Gastrocnemius medialis (tissue), 4 donors: ENCODE measurements at regions of chr10 and their contacts with region 1.

Region 1: DNA sequence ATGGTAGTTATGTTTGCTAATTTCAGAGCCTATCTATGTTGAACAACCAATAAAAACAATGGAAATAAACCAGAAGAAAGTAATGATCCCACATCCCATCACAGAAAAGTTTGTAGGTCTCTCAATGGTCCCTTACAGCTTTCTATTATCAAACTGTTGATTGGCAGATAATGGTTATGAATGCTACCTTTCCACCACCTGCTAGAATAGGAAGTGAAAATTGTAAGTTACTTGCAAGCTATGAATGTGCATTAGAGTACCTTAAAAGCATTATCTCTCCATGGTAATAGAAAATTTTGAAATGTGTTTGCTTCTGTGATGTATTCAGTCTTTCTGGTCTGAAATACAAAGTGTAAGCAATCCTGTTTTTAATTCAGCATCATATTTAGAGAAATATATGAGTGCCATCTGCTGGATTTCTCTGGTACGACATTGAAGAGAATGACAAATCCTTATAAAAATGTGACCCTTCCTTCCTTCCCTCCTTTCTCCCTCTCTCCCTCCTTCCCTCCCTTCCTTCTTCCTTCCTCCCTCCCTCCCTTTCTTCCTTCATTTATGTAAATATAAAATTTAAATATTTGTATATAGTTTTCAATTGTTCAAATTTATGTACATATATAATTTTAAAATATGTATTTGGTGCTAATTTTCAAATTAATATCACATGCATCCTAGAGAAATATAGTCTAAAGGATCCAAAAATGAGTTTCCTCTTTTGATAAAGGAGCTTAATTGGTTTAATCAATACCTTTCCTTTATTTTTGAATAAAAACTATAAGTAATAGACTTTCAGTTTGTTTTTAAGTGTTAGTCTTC is 41.4 kb upstream of the PNLIPRP3 start:
- DNase-seq: no peak
- ATAC-seq: no peak
- H3K4me3 ChIP-seq: no peak overlapping the region
- H3K27ac ChIP-seq: no peak overlapping the region
- H3K4me1 ChIP-seq: no peaks in the 10 kb centered on the region
- H3K27me3 ChIP-seq: no peaks in the 10 kb centered on the region
- CTCF ChIP-seq: peak in 4 of 5 experiments; percentile 22 to 52 (median 35)
- POLR2A ChIP-seq: no peak

Region 2: DNA sequence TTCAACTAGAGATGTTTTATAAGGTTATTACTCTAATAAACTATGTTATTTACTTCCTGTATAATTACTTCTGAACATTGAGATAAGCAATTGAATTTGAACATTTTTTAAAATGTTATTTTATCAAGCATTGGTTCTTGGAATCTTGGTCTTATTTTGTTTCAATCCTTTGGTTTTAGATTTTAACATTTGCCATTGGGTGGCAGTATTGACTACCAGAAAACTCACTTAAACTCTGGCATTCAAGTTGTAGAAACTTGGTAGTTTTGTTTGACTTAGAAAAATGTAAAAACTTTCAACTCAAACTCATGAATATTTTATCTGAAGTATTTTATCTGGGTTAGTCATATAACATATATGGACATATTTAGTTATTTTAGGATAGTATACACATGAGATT is 1244.9 kb before region 1 on chr10:
- in situ Hi-C with region 1: no loop called
- intact Hi-C with region 1: loop called (anchors 5 kb)
- DNase-seq: no peak
- ATAC-seq: no peak
- H3K4me3 ChIP-seq: no peak overlapping the region
- H3K27ac ChIP-seq: no peak overlapping the region
- H3K4me1 ChIP-seq: no peaks in the 10 kb centered on the region
- H3K27me3 ChIP-seq: no peaks in the 10 kb centered on the region
- CTCF ChIP-seq: no peak
- POLR2A ChIP-seq: no peak

Region 3: GRCh38 chr10:115171392-115171960 is 1214.7 kb before region 1 on chr10:
- in situ Hi-C with region 1: loop called in 1 of 4 experiments (anchors 25 kb)
- intact Hi-C with region 1: no loop called
- DNase-seq: no peak
- ATAC-seq: no peak
- H3K4me3 ChIP-seq: no peak overlapping the region
- H3K27ac ChIP-seq: no peak overlapping the region
- H3K4me1 ChIP-seq: no peaks in the 10 kb centered on the region
- H3K27me3 ChIP-seq: peaks cover 0 to 4% (median 0%) of the 10 kb centered on the region in 3 donors
- CTCF ChIP-seq: no peak
- POLR2A ChIP-seq: no peak

Region 4: DNA sequence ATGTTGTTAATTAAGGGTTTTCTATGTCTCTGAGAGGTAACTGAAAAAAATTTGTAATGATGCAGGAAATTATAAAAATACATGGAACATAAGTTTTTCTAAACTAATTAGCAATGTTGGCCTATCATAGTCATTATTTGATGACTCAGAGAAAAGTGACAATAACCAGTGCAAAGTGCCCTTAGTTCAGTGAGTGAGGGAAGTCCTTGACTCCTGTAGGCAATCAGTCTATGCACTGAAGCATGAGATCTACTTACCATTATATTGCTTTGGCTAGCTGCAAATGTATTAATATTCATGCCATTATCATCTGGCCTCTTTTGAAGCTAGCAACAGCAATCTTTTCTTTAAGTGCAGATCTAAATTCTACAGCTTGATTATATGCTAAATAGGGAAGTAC is 21.3 kb before region 1 on chr10:
- in situ Hi-C with region 1: no loop called
- intact Hi-C with region 1: no loop called
- DNase-seq: no peak
- ATAC-seq: no peak
- H3K4me3 ChIP-seq: no peak overlapping the region
- H3K27ac ChIP-seq: no peak overlapping the region
- H3K4me1 ChIP-seq: no peaks in the 10 kb centered on the region
- H3K27me3 ChIP-seq: no peaks in the 10 kb centered on the region
- CTCF ChIP-seq: no peak
- POLR2A ChIP-seq: no peak

Region 5: GRCh38 chr10:116608686-116609594 is 222.7 kb after region 1 on chr10:
- in situ Hi-C with region 1: no loop called
- intact Hi-C with region 1: no loop called
- DNase-seq: no peak
- ATAC-seq: no peak
- H3K4me3 ChIP-seq: no peak overlapping the region
- H3K27ac ChIP-seq: no peak overlapping the region
- H3K4me1 ChIP-seq: no peaks in the 10 kb centered on the region
- H3K27me3 ChIP-seq: peaks cover 6 to 18% (median 16%) of the 10 kb centered on the region in 3 donors
- CTCF ChIP-seq: no peak
- POLR2A ChIP-seq: no peak